ENCODE measurements at regions of chr3 and their contacts with region 1.

Region 1: DNA sequence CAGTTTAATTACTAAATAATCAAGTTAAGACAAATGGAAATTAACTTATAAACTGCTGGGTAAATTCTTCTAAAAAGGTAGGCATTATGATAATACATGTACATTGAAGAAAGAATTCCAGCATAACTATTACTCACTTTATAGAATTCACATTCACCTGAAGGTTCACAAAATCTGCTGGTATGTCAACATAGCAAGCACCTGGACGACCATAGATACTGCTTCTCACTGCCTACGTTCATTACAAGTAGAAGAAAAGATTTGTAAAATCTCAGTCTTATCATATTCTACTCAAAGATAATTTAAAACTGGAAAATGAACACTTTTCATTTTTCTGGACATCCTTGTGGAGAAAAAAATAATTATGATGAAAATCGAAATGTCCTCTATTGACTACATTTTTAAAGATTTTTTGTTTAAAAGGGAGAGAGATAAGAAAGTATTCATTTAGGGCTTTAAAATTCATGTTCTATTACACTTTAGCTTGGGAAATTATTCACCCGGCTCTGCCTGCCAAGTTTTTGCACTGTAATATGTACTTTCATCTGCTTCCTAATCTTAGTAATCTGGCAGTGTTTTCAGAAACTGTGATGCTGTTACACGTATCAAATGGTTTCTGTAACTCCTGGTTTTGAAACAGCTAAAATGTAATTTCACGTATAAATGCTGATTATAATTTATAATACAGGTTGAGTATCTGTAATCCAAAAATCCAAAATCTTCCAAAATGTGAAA is 16.1 kb downstream of the HACL1 start:
- DNase-seq: no peak
- H3K4me3 Mint-ChIP-seq: no peak overlapping the region
- H3K27ac Mint-ChIP-seq: no peak overlapping the region
- H3K4me1 Mint-ChIP-seq: no peaks in the 10 kb centered on the region
- H3K27me3 Mint-ChIP-seq: no peaks in the 10 kb centered on the region

Region 2: GRCh38 chr3:15523660-15524417 is 61.4 kb before region 1 on chr3:
- intact Hi-C with region 1: loop called (anchors 2 kb)
- DNase-seq: no peak
- H3K4me3 Mint-ChIP-seq: no peak overlapping the region
- H3K27ac Mint-ChIP-seq: no peak overlapping the region
- H3K4me1 Mint-ChIP-seq: peaks cover 27% of the 10 kb centered on the region
- H3K27me3 Mint-ChIP-seq: peaks cover 4% of the 10 kb centered on the region

Region 3: DNA sequence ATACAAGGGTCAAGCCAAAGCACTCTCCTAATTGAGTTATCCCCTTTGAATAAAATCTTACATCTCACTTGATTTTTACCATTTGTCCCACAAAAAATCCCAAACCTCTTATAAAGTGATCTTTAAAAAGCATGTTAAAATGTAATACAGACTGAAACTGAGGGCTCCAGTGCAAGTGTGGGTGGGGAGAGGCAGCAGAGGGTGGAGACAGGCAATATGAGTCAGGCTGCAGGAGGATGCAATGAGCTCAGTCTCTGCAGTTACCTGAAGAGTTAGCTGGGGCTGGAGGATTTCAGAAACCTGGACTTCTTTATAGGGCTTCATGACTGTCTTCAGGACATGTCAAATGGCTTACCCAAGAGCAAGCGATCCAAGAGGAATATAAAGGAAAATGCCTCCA is 49.5 kb before region 1 on chr3:
- intact Hi-C with region 1: no loop called
- DNase-seq: peak; percentile 86
- H3K4me3 Mint-ChIP-seq: peak overlapping the region; percentile 76
- H3K27ac Mint-ChIP-seq: peak overlapping the region; percentile 91
- H3K4me1 Mint-ChIP-seq: peaks cover 54% of the 10 kb centered on the region
- H3K27me3 Mint-ChIP-seq: no peaks in the 10 kb centered on the region

Region 4: DNA sequence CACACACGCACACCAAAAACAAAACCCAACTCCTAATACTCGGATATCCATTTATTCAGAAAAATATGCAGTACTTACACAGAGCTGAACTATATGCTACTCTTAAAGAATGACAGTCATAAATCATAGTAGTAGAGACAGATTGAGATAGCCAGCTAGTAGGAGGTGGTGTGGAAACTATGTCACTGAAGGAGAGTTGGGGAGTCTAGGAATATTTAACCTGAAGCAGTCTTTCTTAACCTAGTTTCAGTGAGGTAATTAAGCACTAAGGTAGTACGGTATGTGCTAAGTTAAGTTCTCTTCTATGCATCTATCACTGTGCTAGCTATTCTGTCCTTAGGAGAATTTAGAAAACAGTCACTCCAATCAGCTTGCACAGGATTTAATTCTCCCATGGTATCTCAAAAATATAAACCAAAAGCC is 158.3 kb after region 1 on chr3:
- intact Hi-C with region 1: no loop called
- DNase-seq: no peak
- H3K4me3 Mint-ChIP-seq: no peak overlapping the region
- H3K27ac Mint-ChIP-seq: no peak overlapping the region
- H3K4me1 Mint-ChIP-seq: peaks cover 45% of the 10 kb centered on the region
- H3K27me3 Mint-ChIP-seq: no peaks in the 10 kb centered on the region